ENCODE measurements at regions of chr3 and their contacts with region 1.

Region 1: GRCh38 chr3:152574461-152575079 is 260.4 kb upstream of the P2RY1 start:
- DNase-seq: no peak
- H3K4me3 ChIP-seq: no peak overlapping the region
- H3K27me3 ChIP-seq: no peaks in the 10 kb centered on the region
- CTCF ChIP-seq: peak; percentile 57

Region 2: GRCh38 chr3:152213203-152213602 is 361.4 kb before region 1 on chr3:
- CTCF ChIA-PET with region 1: no interaction called
- POLR2A ChIA-PET with region 1: no interaction called
- DNase-seq: no peak
- H3K4me3 ChIP-seq: no peak overlapping the region
- H3K27me3 ChIP-seq: no peaks in the 10 kb centered on the region
- CTCF ChIP-seq: no peak

Region 3: GRCh38 chr3:152430223-152431002 is 144.2 kb before region 1 on chr3:
- CTCF ChIA-PET with region 1: no interaction called
- POLR2A ChIA-PET with region 1: no interaction called
- DNase-seq: no peak
- H3K4me3 ChIP-seq: no peak overlapping the region
- H3K27me3 ChIP-seq: no peaks in the 10 kb centered on the region
- CTCF ChIP-seq: no peak

Region 4: GRCh38 chr3:152471814-152472671 is 102.5 kb before region 1 on chr3:
- CTCF ChIA-PET with region 1: interaction called, 13 read pairs
- POLR2A ChIA-PET with region 1: no interaction called
- DNase-seq: no peak
- H3K4me3 ChIP-seq: no peak overlapping the region
- H3K27me3 ChIP-seq: no peaks in the 10 kb centered on the region
- CTCF ChIP-seq: peak; percentile 74

Region 5: GRCh38 chr3:152531717-152532116 is 42.9 kb before region 1 on chr3:
- CTCF ChIA-PET with region 1: no interaction called
- POLR2A ChIA-PET with region 1: no interaction called
- DNase-seq: no peak
- H3K4me3 ChIP-seq: no peak overlapping the region
- H3K27me3 ChIP-seq: no peaks in the 10 kb centered on the region
- CTCF ChIP-seq: no peak

Region 6: GRCh38 chr3:152729906-152730305 is 155.3 kb after region 1 on chr3:
- CTCF ChIA-PET with region 1: no interaction called
- POLR2A ChIA-PET with region 1: no interaction called
- DNase-seq: no peak
- H3K4me3 ChIP-seq: no peak overlapping the region
- H3K27me3 ChIP-seq: no peaks in the 10 kb centered on the region
- CTCF ChIP-seq: no peak

Measured in BJ (cell line).